Endothelial cell of umbilical vein (primary cell): ENCODE measurements at regions of chr14 and their contacts with region 1.

Region 1: DNA sequence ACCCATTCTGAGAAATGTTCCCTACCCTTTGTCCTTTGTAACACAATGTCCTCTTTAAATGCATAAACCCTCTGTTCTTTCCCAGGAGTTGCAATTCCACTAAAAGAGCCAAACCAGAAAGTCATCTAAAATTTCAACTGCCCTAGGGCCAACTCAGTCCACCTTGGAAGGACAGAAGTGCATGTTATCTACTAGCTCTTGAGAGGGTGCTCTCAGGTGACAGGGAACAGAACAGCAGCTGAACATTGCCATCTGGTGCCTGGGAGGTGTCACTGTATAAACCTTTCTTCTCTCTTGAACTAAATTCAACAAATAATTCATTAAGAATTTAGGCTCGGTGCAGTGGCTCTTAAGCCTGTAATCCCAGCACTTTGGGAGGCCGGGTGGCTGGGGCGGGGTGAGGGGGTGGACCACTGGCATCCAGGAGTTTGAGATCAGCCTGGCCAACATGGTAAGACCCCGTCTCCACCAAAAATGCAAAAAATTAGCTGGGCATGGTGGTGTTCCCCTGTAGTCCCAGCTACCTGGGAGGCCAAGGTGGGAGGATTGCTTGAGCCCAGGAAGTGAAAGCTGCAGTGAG is 10.3 kb upstream of the FERMT2 start:
- DNase-seq: peak; percentile 74
- H3K4me3 ChIP-seq: no peak overlapping the region
- H3K27ac ChIP-seq: no peak overlapping the region
- H3K4me1 ChIP-seq: peaks cover 10% of the 10 kb centered on the region
- H3K27me3 ChIP-seq: peaks cover 0 to 2% of the 10 kb centered on the region in 2 experiments
- CTCF ChIP-seq: peak; percentile 66 to 67
- POLR2A ChIP-seq: no peak

Region 2: DNA sequence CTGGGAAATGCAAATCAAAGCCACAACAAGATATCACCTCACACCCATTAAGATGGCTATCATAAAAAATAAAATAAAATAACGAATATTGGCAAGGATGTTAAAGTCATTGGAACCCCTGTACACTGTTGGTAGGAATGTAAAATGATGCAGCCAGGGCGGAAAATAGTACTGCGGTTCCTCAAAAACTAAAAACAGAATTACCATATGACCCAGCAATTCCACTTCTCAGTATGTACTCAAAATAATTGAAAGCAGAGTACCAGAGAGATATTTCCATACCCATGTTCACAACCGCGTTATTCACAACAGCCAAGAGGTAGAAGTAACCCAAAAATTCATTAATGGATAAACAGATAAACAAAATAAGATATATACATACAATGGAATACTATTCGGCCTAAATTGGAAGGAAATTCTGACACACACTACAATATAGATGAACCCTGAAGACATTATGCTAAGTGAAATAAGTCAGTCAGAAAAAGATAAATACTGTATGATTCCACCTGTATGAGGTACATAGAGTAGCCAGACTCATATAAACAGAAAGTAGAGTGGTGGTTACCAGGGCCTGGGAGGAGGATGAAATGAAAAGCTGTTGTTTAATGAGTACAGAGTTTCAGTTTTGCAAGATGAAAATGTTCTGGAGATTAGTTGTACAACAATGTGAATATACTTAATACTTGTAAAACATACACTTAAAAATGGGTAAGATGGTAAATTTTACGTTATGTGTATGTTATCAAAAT is 493.5 kb before region 1 on chr14:
- CTCF ChIA-PET with region 1: no interaction called
- POLR2A ChIA-PET with region 1: no interaction called
- dilution Hi-C with region 1: no loop called
- intact Hi-C with region 1: loop called (anchors 5 kb)
- DNase-seq: no peak
- H3K4me3 ChIP-seq: no peak overlapping the region
- H3K27ac ChIP-seq: no peak overlapping the region
- H3K4me1 ChIP-seq: no peaks in the 10 kb centered on the region
- H3K27me3 ChIP-seq: no peaks in the 10 kb centered on the region
- CTCF ChIP-seq: no peak
- POLR2A ChIP-seq: no peak

Region 3: GRCh38 chr14:52824507-52824906 is 136.6 kb before region 1 on chr14:
- CTCF ChIA-PET with region 1: interaction called, 173 read pairs
- POLR2A ChIA-PET with region 1: interaction called, 4 read pairs
- dilution Hi-C with region 1: no loop called
- intact Hi-C with region 1: loop called (anchors 1 kb)
- DNase-seq: peak; percentile 17
- H3K4me3 ChIP-seq: no peak overlapping the region
- H3K27ac ChIP-seq: no peak overlapping the region
- H3K4me1 ChIP-seq: peaks cover 4% of the 10 kb centered on the region
- H3K27me3 ChIP-seq: no peaks in the 10 kb centered on the region
- CTCF ChIP-seq: no peak
- POLR2A ChIP-seq: no peak

Region 4: GRCh38 chr14:52888838-52889484 is 72.2 kb before region 1 on chr14:
- CTCF ChIA-PET with region 1: interaction called, 14 read pairs
- POLR2A ChIA-PET with region 1: no interaction called
- dilution Hi-C with region 1: no loop called
- intact Hi-C with region 1: no loop called
- DNase-seq: no peak
- H3K4me3 ChIP-seq: no peak overlapping the region
- H3K27ac ChIP-seq: no peak overlapping the region
- H3K4me1 ChIP-seq: peaks cover 14% of the 10 kb centered on the region
- H3K27me3 ChIP-seq: no peaks in the 10 kb centered on the region
- CTCF ChIP-seq: no peak
- POLR2A ChIP-seq: no peak

Region 5: DNA sequence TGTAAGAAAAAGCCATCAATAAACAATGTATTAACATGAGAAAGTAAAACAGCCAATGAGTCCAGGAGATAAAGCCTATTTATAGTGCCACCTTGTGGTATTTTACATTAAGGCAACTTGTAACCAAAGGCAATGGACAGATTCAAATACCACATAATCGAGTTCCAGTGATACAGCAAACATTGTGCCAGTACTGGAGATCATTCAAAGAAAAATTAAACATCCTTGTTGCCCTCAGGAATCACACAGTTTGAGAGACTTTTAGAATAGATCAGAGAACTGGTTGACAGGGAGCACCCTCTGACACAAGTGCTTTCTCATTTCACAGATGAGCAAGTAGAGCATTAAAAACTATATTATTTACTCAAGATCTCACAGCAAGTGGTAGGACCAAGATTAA is 93.9 kb after region 1 on chr14:
- CTCF ChIA-PET with region 1: interaction called, 11 read pairs
- POLR2A ChIA-PET with region 1: no interaction called
- dilution Hi-C with region 1: no loop called
- intact Hi-C with region 1: loop called (anchors 2 kb)
- DNase-seq: peak; percentile 70
- H3K4me3 ChIP-seq: no peak overlapping the region
- H3K27ac ChIP-seq: no peak overlapping the region
- H3K4me1 ChIP-seq: peaks cover 3% of the 10 kb centered on the region
- H3K27me3 ChIP-seq: no peaks in the 10 kb centered on the region
- CTCF ChIP-seq: peak; percentile 46 to 50
- POLR2A ChIP-seq: no peak

Region 6: GRCh38 chr14:53113989-53114388 is 152.8 kb after region 1 on chr14:
- CTCF ChIA-PET with region 1: no interaction called
- POLR2A ChIA-PET with region 1: no interaction called
- dilution Hi-C with region 1: no loop called
- intact Hi-C with region 1: no loop called
- DNase-seq: no peak
- H3K4me3 ChIP-seq: no peak overlapping the region
- H3K27ac ChIP-seq: no peak overlapping the region
- H3K4me1 ChIP-seq: no peaks in the 10 kb centered on the region
- H3K27me3 ChIP-seq: no peaks in the 10 kb centered on the region
- CTCF ChIP-seq: no peak
- POLR2A ChIP-seq: no peak